ENCODE measurements at regions of chr2 and their contacts with region 1.

Region 1: GRCh38 chr2:19774805-19775176 is 127.0 kb downstream of the TTC32 start:
- DNase-seq: no peak
- H3K4me3 ChIP-seq: no peak overlapping the region
- H3K27ac ChIP-seq: no peak overlapping the region
- H3K4me1 ChIP-seq: peaks cover 11% of the 10 kb centered on the region
- H3K27me3 ChIP-seq: peaks cover 0 to 2% of the 10 kb centered on the region in 2 experiments
- CTCF ChIP-seq: no peak
- POLR2A ChIP-seq: no peak

Region 2: GRCh38 chr2:19711470-19712372 is 63.1 kb before region 1 on chr2:
- CTCF ChIA-PET with region 1: no interaction called
- POLR2A ChIA-PET with region 1: no interaction called
- dilution Hi-C with region 1: no loop called
- intact Hi-C with region 1: loop called (anchors 2 kb)
- DNase-seq: peak; percentile 96
- H3K4me3 ChIP-seq: no peak overlapping the region
- H3K27ac ChIP-seq: peak overlapping the region; percentile 72
- H3K4me1 ChIP-seq: peaks cover 35% of the 10 kb centered on the region
- H3K27me3 ChIP-seq: no peaks in the 10 kb centered on the region
- CTCF ChIP-seq: no peak
- POLR2A ChIP-seq: no peak

Region 3: GRCh38 chr2:19752500-19752899 is 22.3 kb before region 1 on chr2:
- CTCF ChIA-PET with region 1: no interaction called
- POLR2A ChIA-PET with region 1: no interaction called
- dilution Hi-C with region 1: no loop called
- intact Hi-C with region 1: loop called (anchors 1 kb)
- DNase-seq: no peak
- H3K4me3 ChIP-seq: no peak overlapping the region
- H3K27ac ChIP-seq: no peak overlapping the region
- H3K4me1 ChIP-seq: no peaks in the 10 kb centered on the region
- H3K27me3 ChIP-seq: peaks cover 0 to 2% of the 10 kb centered on the region in 2 experiments
- CTCF ChIP-seq: no peak
- POLR2A ChIP-seq: no peak

Region 4: GRCh38 chr2:19801367-19802080 is 26.7 kb after region 1 on chr2:
- CTCF ChIA-PET with region 1: interaction called, 3 read pairs
- POLR2A ChIA-PET with region 1: no interaction called
- dilution Hi-C with region 1: no loop called
- intact Hi-C with region 1: loop called (anchors 1 kb)
- DNase-seq: peak; percentile 97
- H3K4me3 ChIP-seq: no peak overlapping the region
- H3K27ac ChIP-seq: peak overlapping the region; percentile 47
- H3K4me1 ChIP-seq: peaks cover 13% of the 10 kb centered on the region
- H3K27me3 ChIP-seq: peaks cover 0 to 2% of the 10 kb centered on the region in 2 experiments
- CTCF ChIP-seq: no peak
- POLR2A ChIP-seq: no peak

Measured in endothelial cell of umbilical vein (primary cell).